OCI-LY7 (cell line): ENCODE measurements at regions of chrX and their contacts with region 1.

Region 1: GRCh38 chrX:106999002-106999975 is 723 bp downstream of the MORC4 start:
- DNase-seq: peak; percentile 67
- H3K4me3 ChIP-seq: peak overlapping the region; percentile 78
- H3K27ac ChIP-seq: peak overlapping the region; percentile 33
- H3K4me1 ChIP-seq: peaks cover 9% of the 10 kb centered on the region
- CTCF ChIP-seq: peak; percentile 75

Region 2: GRCh38 chrX:106726485-106727437 is 272.5 kb before region 1 on chrX and contains the start of gene RNF128:
- CTCF ChIA-PET with region 1: no interaction called
- POLR2A ChIA-PET with region 1: no interaction called
- intact Hi-C with region 1: no loop called
- DNase-seq: no peak
- H3K4me3 ChIP-seq: no peak within 1 kb of the TSS
- H3K27ac ChIP-seq: no peak within 1 kb of the TSS
- H3K4me1 ChIP-seq: no peaks in the 10 kb centered on the region
- CTCF ChIP-seq: no peak
- total RNA-seq, gene RNF128: not detected in 2 replicates

Region 3: DNA sequence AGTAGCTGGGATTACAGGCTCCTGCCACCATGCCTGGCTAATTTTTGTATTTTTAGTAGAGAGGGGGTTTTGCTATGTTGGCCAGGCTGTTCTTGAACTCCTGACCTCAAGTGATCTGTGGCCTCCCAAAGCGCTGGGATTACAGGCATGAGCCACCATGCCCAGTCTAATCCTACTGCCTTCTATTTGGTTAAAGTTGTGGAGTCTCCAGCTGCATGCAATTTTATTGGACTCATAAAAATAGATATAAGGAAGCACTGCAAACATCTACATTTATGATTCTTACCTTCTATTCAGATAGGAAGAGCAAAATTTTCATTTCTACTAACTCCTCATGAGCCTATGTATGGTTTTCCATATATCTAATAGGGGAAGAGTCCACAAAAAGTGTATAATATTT is 109.8 kb before region 1 on chrX:
- CTCF ChIA-PET with region 1: no interaction called
- POLR2A ChIA-PET with region 1: no interaction called
- intact Hi-C with region 1: no loop called
- DNase-seq: no peak
- H3K4me3 ChIP-seq: no peak overlapping the region
- H3K27ac ChIP-seq: no peak overlapping the region
- H3K4me1 ChIP-seq: no peaks in the 10 kb centered on the region
- CTCF ChIP-seq: no peak

Region 4: GRCh38 chrX:107118322-107119147 is 119.2 kb after region 1 on chrX and contains the start of gene RBM41:
- CTCF ChIA-PET with region 1: no interaction called
- POLR2A ChIA-PET with region 1: no interaction called
- intact Hi-C with region 1: loop called (anchors 10 kb)
- DNase-seq: peak; percentile 84
- H3K4me3 ChIP-seq: peak within 1 kb of the TSS; percentile 88
- H3K27ac ChIP-seq: peak within 1 kb of the TSS; percentile 34
- H3K4me1 ChIP-seq: peaks cover 9% of the 10 kb centered on the region
- CTCF ChIP-seq: no peak
- total RNA-seq, gene RBM41: 14.6 and 23.9 TPM in 2 replicates

Region 5: DNA sequence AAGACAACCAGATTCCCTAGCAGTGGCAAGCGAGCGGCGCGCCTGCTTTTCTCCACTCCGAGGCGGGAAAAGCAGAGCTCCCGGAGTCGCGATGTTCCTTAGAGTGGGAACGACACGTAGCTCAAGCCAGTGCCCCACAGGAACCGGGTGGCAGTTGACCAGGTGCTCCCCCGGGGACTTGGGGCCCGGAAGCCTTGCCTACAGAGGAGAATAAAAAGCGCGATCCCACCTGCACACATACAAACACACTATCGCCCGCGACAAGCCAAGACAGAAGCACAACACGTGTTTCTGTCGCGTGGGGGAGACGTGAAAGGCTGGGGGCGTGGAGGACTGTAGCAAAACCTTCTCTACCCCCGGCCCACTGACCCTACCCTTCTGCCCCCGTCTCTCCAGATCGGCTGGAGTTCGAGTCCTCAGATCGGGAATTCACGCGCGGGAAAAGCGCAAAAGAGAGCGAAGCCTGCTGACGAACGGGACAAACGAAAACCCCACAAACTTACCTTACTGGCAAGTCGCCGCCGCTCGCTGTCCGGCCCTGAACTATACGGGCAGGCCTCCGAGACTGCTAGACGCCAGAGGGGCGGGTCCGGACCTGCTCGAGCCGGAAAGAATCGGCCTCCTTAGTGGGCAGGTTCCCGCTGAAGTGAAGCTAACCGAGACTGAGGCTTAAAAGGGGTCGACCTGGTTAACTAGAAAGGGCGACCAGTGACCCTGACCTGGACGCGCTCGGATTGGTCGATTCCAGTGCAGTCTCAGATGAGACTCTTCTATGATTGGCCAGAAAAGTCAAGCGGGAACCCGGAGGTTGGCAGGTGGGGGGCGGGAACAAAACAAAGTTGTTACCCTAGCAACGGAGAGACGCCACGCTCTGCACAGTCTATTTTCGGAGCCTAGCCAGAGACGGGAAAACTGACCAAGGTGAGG is 206.7 kb after region 1 on chrX and contains the starts of genes DNAAF6 and NUP62CL:
- CTCF ChIA-PET with region 1: no interaction called
- POLR2A ChIA-PET with region 1: no interaction called
- intact Hi-C with region 1: loop called (anchors 5 kb)
- DNase-seq: peak; percentile 86
- H3K4me3 ChIP-seq: peak within 1 kb of the TSS; percentile 86
- H3K27ac ChIP-seq: peak within 1 kb of the TSS; percentile 62
- H3K4me1 ChIP-seq: no peaks in the 10 kb centered on the region
- CTCF ChIP-seq: no peak
- total RNA-seq, gene DNAAF6: not detected in 2 replicates
- total RNA-seq, gene NUP62CL: 23.4 and 37.6 TPM in 2 replicates

Region 6: GRCh38 chrX:107448998-107449835 is 449.9 kb after region 1 on chrX and contains the start of gene FRMPD3:
- CTCF ChIA-PET with region 1: no interaction called
- POLR2A ChIA-PET with region 1: no interaction called
- intact Hi-C with region 1: loop called (anchors 10 kb)
- DNase-seq: peak; percentile 70
- H3K4me3 ChIP-seq: peak within 1 kb of the TSS; percentile 73
- H3K27ac ChIP-seq: peak within 1 kb of the TSS; percentile 86
- H3K4me1 ChIP-seq: peaks cover 71% of the 10 kb centered on the region
- CTCF ChIP-seq: no peak; the same call in 1 of the 2 replicates
- total RNA-seq, gene FRMPD3: 5.8 and 6.5 TPM in 2 replicates